GM13976 (cell line): ENCODE measurements at regions of chr6 and their contacts with region 1.

Region 1: DNA sequence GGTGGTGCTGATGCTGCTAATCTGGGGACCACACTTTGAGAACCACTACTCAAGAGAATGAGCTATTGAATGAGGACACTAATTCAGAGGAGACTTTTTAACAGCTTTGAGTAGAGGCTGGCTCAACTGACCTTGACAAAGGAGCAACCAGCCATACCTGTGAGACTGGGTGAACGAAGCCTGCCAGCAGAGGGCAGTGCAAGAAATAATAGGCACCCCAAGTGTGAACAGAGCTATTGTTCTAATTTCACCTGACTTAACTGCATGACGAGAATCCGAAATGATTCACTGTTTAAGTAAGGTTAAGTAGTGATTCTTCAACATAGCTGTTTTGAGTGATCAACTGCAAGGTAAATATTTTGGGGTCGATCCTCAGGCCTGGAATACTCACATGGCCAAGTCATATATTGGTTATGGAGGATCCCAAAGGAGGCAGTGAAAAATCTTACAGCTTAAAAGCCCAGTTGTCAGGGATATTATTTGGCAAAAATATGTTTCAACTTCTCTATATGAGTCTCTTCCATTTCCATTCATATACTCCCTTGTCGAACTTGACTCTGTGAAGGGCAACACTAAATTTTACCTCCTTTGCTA is 550.5 kb upstream of the MARCKS start:
- DNase-seq: peak; percentile 18
- CTCF ChIP-seq: peak; percentile 58

Region 2: DNA sequence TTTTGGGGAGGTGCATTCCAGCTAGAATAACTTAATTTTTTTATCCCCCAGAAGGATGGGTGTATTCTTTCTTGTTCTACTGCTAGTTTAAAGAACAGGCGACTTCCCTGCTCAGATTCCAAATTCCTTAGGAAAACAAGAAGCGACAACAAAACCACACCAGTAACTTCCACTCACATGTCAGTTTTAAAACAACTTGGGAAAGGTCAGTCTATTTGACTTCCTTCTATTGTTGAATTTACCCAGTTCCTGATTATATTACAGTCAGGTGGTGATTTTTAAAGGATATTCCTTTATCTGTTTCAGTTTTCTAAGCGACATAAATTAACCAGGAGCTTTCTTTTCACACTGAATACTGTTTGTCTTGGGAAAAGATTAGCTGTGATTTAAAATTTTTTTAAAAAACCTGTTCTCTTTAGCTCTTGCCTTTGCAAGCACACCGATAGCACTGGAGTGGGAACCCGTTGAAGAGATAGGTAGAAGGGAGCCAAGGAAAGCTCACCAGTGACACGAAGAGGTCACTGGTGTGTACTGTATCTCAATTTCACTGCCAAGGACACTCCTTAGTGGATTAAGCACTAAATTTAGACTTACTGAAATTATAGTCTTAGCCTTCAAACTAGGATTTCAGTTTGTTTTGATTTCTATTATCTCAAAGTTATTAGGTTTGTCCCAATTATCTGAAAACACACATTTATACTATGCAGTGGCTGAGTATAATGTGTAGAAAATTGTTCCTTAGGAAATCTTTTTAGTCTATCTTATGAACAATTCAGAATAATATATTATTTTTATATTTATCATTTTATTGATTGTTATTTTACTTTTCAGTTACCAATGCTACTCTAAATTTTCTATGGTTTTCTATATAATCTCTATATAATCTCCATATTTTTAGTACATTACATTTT is 572.8 kb after region 1 on chr6:
- in situ Hi-C with region 1: loop called (anchors 10 kb)
- DNase-seq: peak; percentile 37
- CTCF ChIP-seq: peak; percentile 72